ENCODE measurements at regions of chrX and their contacts with region 1.

Region 1: DNA sequence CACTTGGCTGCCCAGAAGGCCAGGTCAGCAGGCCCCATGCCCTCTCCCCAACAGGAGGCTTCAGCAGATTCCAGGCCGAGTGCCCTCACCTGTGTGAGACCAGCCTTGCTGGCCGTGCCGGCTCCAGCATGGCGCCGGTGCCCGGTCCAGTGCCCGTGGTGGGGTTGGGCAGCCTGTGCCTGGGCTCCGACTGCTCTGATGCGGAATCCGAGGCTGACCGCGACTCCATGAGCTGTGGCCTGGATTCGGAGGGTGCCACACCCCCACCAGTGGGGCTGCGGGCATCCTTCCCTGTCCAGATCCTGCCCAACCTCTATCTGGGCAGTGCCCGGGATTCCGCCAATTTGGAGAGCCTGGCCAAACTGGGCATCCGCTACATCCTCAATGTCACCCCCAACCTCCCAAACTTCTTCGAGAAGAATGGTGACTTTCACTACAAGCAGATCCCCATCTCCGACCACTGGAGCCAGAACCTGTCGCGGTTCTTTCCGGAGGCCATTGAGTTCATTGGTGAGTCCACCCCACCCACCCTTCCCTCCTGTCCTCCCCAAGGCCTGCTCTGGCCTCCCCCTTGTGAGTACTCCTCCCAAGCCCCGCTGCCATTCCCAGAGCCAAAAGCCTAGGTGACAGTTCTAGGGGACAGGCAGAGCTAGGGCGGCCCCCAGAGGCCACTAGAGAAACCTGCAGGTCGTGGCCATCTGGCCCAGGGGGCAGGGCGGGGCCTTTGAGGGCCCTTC is 2.3 kb downstream of the DUSP9 start:
- DNase-seq: no peak
- ATAC-seq: peak; percentile 80
- H3K4me3 Mint-ChIP-seq: no peak overlapping the region
- H3K27ac Mint-ChIP-seq: no peak overlapping the region
- H3K4me1 Mint-ChIP-seq: no peaks in the 10 kb centered on the region
- H3K27me3 Mint-ChIP-seq: peaks cover 1% of the 10 kb centered on the region
- CTCF ChIP-seq: no peak

Region 2: DNA sequence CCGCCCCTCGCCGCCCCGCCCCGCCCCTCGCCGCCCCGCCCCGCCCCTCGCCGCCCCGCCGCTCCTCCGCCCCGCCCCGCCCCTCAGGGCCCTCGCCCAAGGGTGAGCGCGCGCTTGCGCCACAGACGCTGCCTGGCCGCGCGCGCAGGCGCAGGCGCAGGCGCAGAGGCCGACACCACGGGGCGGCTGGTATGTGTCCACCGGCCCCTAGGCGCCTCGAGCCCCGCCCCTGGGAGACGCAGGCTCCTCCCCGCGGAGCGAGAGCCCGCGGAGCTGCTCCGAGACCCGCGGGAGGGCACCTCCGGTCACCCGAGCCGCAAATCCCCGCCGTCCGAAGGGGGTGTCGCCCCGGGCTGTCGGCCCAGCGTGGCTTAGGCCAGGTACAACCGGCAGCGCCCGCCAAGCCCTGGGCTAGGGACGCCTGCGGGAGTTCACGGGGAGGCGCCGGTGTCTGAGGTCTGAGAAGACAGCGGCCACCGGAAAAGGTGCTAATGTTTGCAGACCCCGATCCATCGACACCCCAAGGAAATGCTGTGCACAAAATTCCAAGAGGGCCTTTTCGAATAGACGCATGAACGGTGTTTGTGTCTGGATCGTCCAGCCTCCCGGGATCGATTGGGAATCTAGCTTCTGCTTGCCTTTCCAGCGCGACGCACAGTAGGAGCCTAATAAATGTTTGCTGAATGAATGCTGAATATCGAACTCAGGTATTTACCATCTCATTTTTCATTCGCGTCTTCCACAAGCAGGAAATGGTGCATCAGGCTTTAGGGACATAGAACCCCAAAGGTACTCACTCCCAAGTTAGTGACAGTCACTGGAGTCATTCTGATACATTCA is 49.9 kb before region 1 on chrX:
- CTCF ChIA-PET with region 1: no interaction called
- POLR2A ChIA-PET with region 1: no interaction called
- intact Hi-C with region 1: loop called (anchors 10 kb)
- DNase-seq: peak; percentile 82
- ATAC-seq: peak; percentile 84
- H3K4me3 Mint-ChIP-seq: peak overlapping the region; percentile 77
- H3K27ac Mint-ChIP-seq: no peak overlapping the region
- H3K4me1 Mint-ChIP-seq: peaks cover 36% of the 10 kb centered on the region
- H3K27me3 Mint-ChIP-seq: no peaks in the 10 kb centered on the region
- CTCF ChIP-seq: no peak

Region 3: DNA sequence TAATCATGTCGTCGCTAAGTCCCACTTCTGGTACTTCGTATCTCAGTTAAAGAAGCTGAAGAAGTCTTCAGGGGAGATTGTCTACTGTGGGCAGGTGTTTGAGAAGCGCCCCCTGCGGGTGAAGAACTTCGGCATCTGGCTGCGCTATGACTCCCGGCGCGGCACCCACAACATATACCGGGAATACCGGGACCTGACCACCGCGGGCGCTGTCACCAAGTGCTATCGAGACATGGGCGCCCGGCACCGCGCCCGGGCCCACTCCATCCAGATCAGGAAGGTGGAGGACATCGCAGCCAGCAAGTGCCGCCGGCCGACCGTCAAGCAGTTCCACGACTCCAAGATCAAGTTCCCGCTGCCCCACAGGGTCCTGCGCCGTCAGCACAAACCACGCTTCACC is 12.9 kb after region 1 on chrX:
- CTCF ChIA-PET with region 1: interaction called, 4 read pairs
- POLR2A ChIA-PET with region 1: interaction called, 4 read pairs
- intact Hi-C with region 1: loop called (anchors 2 kb)
- DNase-seq: peak; percentile 44
- ATAC-seq: no peak
- H3K4me3 Mint-ChIP-seq: peak overlapping the region; percentile 55
- H3K27ac Mint-ChIP-seq: no peak overlapping the region
- H3K4me1 Mint-ChIP-seq: peaks cover 2% of the 10 kb centered on the region
- H3K27me3 Mint-ChIP-seq: peaks cover 11% of the 10 kb centered on the region
- CTCF ChIP-seq: no peak